ENCODE measurements at regions of chr15 and their contacts with region 1.

Region 1: DNA sequence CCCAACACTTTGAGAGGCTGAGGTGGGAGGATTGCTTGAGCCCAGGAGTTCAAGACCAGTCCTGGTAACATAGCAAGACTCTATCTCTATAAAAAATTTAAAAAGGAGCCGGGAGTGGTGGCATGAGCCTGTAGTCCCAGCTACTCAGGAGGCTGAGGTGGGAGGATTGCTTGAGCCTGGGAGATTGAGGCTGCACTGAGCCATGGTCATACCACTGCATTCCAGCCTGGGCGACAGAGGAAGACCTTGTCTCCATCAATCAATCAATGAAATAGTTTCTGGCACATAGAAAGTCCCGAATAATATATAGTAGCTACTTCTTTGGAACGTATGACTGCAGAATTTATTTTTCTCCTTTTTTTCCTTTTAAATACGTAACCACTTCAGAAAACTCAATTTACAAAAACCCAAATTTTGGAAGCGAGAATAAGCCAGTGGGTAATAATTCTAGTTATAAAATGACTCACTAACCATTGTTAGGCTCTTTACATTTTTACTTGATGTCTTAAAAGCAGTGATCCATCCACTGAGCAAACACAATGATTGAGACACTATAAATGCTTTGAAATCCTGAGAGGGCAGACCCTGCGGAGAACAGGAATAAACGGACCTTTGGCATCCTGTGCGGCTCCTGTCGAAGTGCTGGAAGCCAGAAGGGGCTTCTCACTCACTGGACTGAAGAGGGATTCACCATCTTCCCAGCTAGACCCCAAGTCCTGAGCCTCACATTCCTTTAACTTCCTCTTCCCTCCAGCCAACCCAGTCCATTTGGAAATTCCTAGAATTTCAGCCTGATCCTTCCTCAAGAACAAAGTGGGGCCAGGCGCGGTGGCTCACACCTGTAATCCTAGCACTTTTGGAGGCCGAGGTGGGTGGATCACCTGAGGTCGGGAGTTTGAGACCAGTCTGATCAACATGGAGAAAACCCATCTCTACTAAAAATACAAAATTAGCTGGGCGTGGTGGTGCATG is 68.4 kb upstream of the MFGE8 start:
- DNase-seq: peak; percentile 90
- ATAC-seq: peak; percentile 87
- H3K4me3 ChIP-seq: no peak overlapping the region; the same call in 1 of the 2 replicates
- H3K27ac ChIP-seq: peak overlapping the region; percentile 85
- H3K4me1 ChIP-seq: peaks cover 23% of the 10 kb centered on the region
- H3K27me3 ChIP-seq: no peaks in the 10 kb centered on the region
- CTCF ChIP-seq: no peak

Region 2: DNA sequence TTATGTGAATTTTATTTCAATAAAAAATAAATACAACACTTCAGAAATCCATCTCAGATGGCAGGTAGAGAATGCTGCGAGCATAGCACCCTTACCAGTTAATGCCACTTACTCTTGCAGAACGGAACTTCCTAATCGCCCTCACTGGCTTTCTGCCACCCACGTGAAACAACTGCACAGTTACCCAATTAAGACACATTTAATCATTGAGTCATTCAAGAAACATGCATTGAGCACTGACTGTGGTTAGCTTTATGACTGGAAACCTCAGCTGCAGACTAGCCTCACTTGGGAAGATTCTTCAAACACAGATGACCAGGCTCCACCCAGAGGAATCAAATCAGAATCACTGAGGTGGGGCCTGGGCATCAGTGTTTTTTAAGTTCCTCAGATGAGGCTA is 62.8 kb before region 1 on chr15:
- CTCF ChIA-PET with region 1: no interaction called
- POLR2A ChIA-PET with region 1: no interaction called
- intact Hi-C with region 1: loop called (anchors 2 kb)
- DNase-seq: peak; percentile 92
- ATAC-seq: peak; percentile 86
- H3K4me3 ChIP-seq: no peak overlapping the region
- H3K27ac ChIP-seq: no peak overlapping the region
- H3K4me1 ChIP-seq: peaks cover 38% of the 10 kb centered on the region
- H3K27me3 ChIP-seq: no peaks in the 10 kb centered on the region
- CTCF ChIP-seq: no peak

Region 3: DNA sequence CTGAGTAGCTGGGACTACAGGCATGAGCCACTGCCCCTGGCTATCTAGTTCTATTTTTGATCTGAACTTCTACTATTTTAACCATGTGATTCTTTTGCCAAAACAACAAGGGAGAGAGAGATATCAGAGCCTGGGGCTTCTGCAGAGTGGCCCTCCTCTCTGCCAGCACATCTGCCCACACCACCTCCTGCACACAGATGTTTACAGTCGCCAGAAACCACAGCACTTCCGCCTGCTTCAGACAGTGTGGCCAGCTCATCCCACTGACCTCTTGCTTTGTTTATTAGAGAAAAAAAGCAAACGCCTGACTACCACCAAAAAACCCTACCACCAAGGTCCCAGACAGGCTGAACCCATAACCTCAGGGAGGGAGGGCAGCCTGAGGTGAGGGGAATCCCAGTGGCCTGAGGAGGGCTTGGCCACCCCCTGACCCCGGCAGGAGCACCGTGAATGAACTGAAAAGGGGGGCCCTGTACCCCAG is 20.8 kb after region 1 on chr15:
- CTCF ChIA-PET with region 1: no interaction called
- POLR2A ChIA-PET with region 1: no interaction called
- intact Hi-C with region 1: no loop called
- DNase-seq: peak; percentile 55
- ATAC-seq: peak; percentile 91
- H3K4me3 ChIP-seq: no peak overlapping the region
- H3K27ac ChIP-seq: no peak overlapping the region
- H3K4me1 ChIP-seq: peaks cover 7% of the 10 kb centered on the region
- H3K27me3 ChIP-seq: no peaks in the 10 kb centered on the region
- CTCF ChIP-seq: no peak

Region 4: GRCh38 chr15:89017370-89018066 is 36.0 kb after region 1 on chr15:
- CTCF ChIA-PET with region 1: no interaction called
- POLR2A ChIA-PET with region 1: no interaction called
- intact Hi-C with region 1: loop called (anchors 2 kb)
- DNase-seq: peak; percentile 86
- ATAC-seq: peak; percentile 75
- H3K4me3 ChIP-seq: peak overlapping the region; percentile 50
- H3K27ac ChIP-seq: peak overlapping the region; percentile 67
- H3K4me1 ChIP-seq: peaks cover 18% of the 10 kb centered on the region
- H3K27me3 ChIP-seq: no peaks in the 10 kb centered on the region
- CTCF ChIP-seq: peak; percentile 87

Region 5: GRCh38 chr15:89441259-89441812 is 459.8 kb after region 1 on chr15:
- CTCF ChIA-PET with region 1: no interaction called
- POLR2A ChIA-PET with region 1: no interaction called
- intact Hi-C with region 1: no loop called
- DNase-seq: peak; percentile 11
- ATAC-seq: no peak
- H3K4me3 ChIP-seq: no peak overlapping the region
- H3K27ac ChIP-seq: no peak overlapping the region
- H3K4me1 ChIP-seq: no peaks in the 10 kb centered on the region
- H3K27me3 ChIP-seq: no peaks in the 10 kb centered on the region
- CTCF ChIP-seq: no peak